HEK293T (cell line): ENCODE measurements at regions of chr1 and their contacts with region 1.

Region 1: DNA sequence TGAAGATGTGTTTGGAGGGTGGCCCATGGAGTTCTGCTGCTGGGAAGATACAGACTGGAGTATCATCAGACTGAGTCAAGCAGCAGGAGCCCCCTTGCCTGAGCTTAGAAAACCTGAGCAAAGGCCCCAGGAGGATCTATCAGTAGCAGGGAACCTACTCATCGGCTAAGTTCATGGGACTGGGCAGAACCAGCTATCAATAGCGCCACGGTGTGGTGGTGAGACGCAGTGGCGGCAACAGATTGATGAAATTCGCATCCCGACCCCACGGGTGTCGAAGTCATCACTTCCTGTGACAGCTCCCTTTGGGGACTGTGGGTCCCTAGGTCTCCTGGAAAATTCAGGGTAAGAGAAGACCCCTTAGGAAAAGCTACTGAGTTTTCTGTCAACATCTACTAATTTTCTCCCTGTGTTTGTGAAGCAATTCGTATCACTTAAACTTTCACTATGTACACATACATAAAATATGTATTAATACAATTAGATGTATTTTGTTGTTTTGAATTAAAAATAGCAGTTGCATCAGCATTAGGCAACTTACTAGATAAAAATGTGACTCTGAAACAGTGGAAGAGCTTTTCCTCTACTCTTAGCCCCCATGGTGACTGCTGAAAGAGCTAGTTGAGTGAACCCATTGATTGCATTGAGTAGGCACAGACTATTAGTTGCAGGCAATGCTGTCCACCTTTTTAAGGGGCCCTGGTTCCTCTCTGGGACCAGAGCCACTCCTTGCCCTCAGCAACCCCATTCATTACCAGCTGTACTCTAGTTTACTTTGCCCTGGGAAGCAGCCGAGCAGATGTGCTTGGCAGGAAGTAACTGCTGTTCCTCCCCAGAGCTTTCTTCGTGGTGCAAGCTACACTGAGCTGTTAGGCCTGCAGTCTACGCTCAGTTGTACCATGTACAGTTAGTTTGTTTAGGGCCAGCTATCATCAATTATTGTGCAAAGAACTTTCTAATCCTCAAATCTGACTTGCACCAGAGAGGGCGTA is 7.3 kb upstream of the CACNA1S start:
- DNase-seq: peak; percentile 83

Region 2: DNA sequence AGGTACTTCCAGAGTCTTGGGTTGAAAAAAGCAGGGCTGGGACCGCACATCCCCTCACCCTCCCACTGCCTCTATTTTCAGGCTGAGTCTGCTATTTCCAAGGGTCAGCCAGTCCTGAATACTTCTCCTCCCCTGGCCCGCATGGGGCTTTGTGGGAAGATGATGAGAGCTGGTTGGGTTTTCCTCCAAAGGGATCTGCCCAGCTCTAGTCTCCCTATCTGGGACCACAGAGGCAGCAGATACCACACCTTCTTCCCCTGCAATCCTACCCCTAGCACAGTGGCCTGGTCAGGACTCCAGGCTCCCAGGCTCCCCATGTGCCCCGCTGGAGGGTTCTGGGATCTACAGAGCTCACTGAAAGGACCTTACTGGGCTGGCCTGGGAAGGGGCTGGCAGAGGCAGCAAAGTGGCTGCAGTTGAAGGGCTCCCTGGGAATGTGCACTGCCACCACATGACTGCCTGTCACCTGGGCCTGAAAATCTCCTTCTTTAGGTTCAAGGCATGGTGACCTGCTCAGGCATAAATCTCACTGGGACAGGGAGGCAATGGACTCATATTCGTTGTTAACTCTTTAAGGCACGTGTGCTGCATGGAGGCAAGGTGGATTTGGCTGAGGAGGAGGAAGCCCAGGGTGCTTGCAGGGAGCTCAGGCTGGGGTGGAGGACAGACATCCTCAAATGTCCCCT is 20.4 kb before region 1 on chr1:
- CTCF ChIA-PET with region 1: interaction called, 10 read pairs
- POLR2A ChIA-PET with region 1: no interaction called
- DNase-seq: no peak

Region 3: GRCh38 chr1:201282931-201283829 is 163.7 kb after region 1 on chr1 and contains the start of gene PKP1:
- CTCF ChIA-PET with region 1: no interaction called
- POLR2A ChIA-PET with region 1: no interaction called
- DNase-seq: no peak